OCI-LY7 (cell line): ENCODE measurements at regions of chr1 and their contacts with region 1.

Region 1: DNA sequence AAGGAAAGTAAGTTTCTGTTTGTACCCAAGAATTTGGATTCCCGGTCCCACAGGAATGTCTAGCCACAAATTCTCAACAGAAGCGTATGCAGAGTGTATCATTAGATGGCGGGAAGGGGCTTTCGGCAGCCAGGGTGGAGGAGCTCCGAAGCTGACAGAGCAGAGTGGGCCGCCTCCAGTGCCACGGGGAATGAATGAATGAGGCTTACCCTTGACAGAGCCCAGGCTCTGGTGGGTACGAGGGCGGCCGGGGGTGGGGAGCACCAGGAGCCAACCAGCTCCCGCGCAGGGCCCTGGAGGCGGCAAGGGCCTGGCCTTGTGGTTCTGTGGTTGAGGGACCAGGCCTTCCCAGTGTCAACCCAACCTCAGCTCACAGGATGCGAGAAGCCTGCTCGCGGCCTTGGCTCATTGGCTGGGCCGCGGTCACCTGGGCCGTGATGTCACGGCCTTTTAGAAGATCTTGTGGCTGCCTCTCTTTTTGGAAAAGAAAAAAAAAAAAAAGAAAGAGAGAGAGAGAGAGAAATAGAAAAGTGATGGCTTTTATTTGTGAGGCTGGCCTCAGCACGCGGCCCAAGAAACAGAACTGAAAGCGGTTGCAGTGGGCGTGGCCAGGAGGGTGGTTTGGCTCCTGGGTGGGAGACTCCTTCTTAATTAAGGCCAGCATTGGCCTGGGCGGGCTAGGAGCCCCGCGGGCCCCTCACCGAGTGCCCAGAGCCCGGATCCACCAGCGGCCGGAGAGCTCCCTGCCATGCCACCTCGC is 34.9 kb upstream of the RUNX3 start:
- DNase-seq: peak; percentile 91
- H3K4me3 ChIP-seq: peak overlapping the region; percentile 61
- H3K27ac ChIP-seq: peak overlapping the region; percentile 76
- H3K4me1 ChIP-seq: peaks cover 42% of the 10 kb centered on the region
- CTCF ChIP-seq: no peak

Region 2: DNA sequence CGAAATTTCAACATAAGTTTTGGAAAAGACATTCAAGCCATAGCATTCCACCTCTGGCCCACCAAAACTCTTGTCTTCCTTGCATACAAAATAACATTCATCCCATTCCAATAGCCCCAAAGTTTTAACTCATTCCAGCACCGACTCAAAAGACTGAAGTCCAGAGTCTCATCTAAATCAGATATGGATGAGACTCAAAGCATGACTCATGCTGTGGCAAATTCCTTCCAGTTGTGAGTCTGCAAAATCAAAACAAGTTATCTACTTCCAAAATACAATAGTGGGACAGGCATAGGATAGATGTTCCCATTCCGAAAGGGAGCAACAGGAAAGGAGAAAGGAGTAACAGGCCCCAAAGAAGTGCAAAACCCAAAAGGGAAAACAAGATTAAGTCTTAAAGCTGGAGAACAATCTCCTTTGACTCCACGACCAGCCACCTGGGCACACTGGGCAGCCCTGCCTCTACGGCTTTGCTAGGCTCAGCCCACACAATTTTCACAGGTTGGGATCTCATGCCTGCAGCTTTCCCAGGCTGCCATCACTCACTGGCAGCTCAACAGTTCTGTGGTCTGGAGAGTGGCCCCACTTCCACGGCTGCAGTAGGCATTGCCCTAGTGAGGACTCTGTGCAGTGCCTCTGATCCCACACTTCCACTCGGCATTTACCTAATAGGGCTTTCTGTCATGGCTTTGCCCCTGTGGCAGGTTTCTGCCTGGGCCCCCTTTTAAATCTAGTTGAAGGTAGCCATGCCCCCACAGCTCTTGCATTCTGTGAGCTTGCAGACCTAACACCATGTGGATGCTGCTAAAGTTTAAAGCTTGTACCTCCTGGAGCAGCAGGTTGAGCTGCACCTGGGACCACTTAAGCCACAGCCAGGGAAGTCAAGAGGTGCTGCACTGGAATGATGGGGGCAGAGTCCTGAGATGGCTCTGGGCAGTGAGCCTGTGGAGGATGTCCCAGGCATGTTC is 85.9 kb before region 1 on chr1:
- CTCF ChIA-PET with region 1: no interaction called
- POLR2A ChIA-PET with region 1: no interaction called
- intact Hi-C with region 1: no loop called
- DNase-seq: no peak
- H3K4me3 ChIP-seq: no peak overlapping the region
- H3K27ac ChIP-seq: no peak overlapping the region
- H3K4me1 ChIP-seq: no peaks in the 10 kb centered on the region
- CTCF ChIP-seq: no peak

Region 3: DNA sequence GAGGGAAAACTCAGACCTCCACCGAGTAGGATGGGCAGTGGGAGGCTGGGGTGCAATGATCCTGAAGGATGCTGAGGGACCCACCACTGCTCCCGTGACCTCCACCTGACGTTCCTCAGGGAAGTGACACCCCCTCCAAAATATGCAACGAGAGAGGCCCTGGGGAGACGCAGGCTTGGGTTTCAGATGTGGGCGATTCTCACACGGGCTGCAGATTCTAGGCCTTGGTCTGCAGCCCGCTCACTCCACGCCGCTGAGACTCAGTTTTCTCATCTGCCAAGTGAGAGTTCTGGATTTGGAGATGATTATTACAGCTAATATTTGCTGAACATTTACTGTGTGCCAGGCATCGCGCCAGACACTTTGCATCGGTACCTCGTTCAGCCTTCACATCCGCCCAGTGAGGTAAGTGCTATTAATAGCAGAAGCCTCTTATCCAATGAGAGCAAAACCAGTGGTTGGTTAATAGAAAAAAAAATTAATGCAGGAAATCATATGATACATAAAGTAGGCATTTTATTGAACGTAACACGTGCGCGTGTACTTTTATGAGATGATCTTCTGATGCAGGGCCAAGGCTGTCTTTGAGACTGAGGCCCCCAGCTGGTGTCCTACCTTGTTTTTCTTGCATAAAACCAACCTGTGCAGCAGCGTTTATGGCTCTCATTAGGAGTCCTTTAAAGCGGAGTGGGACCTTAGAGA is 67.1 kb after region 1 on chr1:
- CTCF ChIA-PET with region 1: interaction called, 4 read pairs
- POLR2A ChIA-PET with region 1: interaction called, 5 read pairs
- intact Hi-C with region 1: loop called (anchors 1 kb)
- DNase-seq: peak; percentile 86
- H3K4me3 ChIP-seq: peak overlapping the region; percentile 39
- H3K27ac ChIP-seq: peak overlapping the region; percentile 74
- H3K4me1 ChIP-seq: peaks cover 66% of the 10 kb centered on the region
- CTCF ChIP-seq: peak; percentile 56; the same call in 1 of the 2 replicates